ENCODE measurements at regions of chr11 and their contacts with region 1.

Region 1: DNA sequence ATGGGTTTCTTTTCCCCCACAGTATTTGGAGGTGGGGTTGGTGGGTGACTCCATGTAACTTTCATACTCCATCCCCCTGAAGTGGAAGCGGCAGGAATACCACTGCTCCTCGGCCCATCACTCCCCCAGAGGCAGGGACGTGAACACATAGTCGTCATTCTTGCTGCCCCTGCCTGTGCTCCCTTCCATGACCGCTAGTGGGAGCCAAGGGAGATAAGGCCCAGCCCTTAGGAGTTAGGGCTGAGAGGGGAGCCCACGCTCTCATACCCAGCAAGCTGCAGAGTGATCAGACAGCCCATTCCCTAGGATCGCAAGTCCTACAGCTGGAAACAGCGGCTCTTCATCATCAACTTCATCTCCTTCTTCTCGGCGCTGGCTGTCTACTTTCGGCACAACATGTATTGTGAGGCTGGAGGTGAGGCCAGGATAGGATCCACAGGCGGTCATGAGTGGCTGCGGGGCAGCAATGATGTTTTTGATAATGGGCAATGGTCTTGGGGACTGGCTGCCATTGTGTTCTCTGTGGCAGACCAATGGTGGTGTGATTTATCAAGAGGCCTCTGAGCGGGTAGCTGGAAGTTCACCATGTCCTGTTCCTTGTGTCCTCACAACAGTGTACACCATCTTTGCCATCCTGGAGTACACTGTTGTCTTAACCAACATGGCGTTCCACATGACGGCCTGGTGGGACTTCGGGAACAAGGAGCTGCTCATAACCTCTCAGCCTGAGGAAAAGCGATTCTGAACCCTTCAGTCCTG is 15.9 kb downstream of the RHOG start:
- H3K4me3 ChIP-seq: no peak overlapping the region
- H3K27ac ChIP-seq: no peak overlapping the region
- H3K4me1 ChIP-seq: no peaks in the 10 kb centered on the region
- CTCF ChIP-seq: peak; percentile 85

Region 2: DNA sequence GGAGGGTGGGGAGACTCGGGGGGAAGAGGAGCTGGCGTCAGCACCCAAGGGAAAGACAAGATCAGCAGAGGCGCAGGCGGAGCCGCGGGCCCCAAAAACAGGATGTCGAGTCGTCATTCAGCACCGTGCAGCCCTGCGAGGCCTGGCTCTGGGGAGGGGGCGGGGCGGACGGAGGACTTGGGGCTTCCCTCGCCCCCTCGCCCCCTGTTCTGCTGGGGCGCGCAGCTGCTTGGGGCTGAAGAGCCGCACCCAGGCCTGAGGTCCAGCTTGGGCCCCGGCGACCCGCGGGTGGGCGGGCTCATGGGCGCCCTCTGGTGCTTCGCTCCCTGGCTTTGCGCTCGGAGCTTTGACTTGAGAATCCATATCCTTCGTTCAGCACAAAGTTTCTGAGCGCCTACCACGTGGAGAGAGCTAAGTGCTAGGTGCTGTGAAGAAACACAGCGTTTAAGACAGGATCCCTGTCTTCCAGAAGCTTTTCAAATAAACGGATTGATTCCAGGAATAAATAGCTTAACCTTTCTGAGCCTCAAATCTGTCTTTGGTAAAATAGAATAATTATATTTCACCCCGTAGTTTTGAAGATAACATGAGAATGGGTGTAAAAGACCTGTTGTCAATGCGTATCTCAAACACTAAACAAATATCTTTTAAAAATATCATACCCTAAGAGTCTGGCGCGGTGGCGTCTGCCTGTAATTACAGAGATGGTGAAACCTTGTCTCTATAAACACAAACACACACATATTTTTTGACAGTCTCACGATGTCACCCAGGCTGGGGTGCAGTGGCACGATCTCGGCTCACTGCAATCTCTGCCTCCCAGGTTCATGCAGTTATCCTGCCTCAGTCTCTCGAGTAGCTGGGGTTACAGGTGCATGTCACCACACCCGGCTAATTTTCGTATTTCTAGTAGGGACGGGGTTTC is 16.8 kb after region 1 on chr11:
- CTCF ChIA-PET with region 1: interaction called, 4 read pairs
- POLR2A ChIA-PET with region 1: interaction called, 14 read pairs
- H3K4me3 ChIP-seq: peak overlapping the region; percentile 67
- H3K27ac ChIP-seq: 0 out of 2 replicates have a peak overlapping the region, but pooled peaks have one; percentile 19
- H3K4me1 ChIP-seq: no peaks in the 10 kb centered on the region
- CTCF ChIP-seq: peak; percentile 82

Region 3: DNA sequence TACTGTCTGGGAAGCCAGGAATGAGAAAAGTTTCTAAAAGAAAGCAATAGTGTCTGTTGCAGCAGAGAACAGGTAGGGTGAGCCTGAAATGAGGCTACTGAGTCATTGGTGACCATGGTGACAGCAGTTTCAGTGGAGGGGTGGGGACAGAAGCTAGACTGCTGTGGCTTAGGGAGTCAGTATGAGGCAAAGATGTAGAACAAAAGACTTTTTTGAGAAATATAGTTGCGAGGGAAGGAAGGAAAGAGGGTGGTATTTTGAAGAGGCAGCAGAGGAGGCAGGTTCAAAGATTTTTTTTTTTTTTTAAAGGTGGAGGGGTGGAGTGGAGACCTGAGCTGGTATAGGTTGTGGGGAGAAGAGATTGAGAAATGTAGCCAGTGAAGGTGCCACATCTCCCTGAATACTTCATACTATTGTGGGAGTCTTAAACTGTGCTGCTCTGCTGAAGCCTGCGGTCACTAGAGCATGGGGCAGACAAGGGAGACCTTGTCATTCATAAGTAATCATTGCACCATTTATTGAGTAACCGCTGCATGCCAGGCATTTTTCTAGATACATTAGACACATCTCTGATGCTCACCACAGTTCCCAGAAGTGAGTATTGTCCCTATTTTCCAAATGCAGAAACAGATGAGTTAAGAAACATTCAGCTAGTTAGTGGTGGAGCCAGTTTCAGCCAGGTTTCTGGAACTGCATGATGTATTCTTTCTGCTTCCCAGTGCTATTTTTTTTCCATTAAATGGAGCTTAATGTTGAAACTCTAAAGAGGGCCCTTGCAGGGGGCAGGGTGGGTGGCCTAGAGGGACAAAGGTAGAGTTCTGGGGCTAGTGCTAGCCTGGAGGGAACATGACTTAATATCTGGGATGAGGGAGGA is 80.4 kb after region 1 on chr11:
- CTCF ChIA-PET with region 1: no interaction called
- POLR2A ChIA-PET with region 1: no interaction called
- H3K4me3 ChIP-seq: no peak overlapping the region
- H3K27ac ChIP-seq: no peak overlapping the region
- H3K4me1 ChIP-seq: no peaks in the 10 kb centered on the region
- CTCF ChIP-seq: no peak